Activated CD4-positive, alpha-beta T cell treated with anti-CD3 and anti-CD28 coated beads, Interleukin-2, amount 10 ng/mL, durations not matched to agents 24 days and 14 days (primary cell): ENCODE measurements at regions of chr5 and their contacts with region 1.

Region 1: GRCh38 chr5:148805326-148806290 is 20.8 kb upstream of the ADRB2 start:
- DNase-seq: no peak
- H3K4me3 Mint-ChIP-seq: peak overlapping the region; percentile 60
- H3K27ac Mint-ChIP-seq: peak overlapping the region; percentile 88
- H3K4me1 Mint-ChIP-seq: peaks cover 47% of the 10 kb centered on the region
- H3K27me3 Mint-ChIP-seq: peaks cover 11% of the 10 kb centered on the region

Region 2: DNA sequence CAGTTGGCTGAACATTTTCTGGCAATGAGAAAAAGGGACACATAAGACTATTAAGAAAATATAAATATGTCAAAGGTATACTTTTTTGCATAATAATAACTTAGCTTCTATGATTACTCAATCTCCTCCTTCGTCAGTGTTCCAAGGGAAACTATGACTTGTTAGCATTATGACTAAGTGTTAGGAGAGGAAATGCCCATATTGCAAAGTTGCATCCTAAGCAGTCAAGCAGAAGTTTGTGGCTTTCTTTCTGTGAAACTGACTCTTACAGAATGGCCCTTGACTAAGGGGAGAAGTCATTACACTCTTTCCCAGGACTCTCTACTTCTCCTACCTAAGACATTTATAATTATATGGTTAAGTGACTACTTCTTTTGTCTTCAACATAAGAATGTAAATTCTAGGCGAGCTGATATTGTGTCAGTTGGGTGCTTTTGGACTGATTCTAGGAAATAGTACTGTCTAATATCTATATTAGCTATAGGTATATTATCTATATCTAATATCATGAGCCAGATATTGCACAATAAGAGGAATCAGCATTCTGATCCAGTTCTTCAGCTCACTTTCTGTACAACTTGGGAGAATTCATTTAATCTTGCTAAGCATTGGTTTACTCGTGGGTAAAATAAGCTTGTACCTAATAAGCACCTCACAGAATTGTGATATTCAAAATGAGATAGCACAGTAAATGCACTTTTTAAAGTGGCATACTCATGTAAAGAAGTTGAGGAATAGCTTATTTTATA is 619.2 kb before region 1 on chr5:
- intact Hi-C with region 1: loop called (anchors 5 kb)
- DNase-seq: peak; percentile 61
- H3K4me3 Mint-ChIP-seq: no peak overlapping the region
- H3K27ac Mint-ChIP-seq: no peak overlapping the region
- H3K4me1 Mint-ChIP-seq: peaks cover 6% of the 10 kb centered on the region
- H3K27me3 Mint-ChIP-seq: peaks cover 8% of the 10 kb centered on the region

Region 3: GRCh38 chr5:148620696-148621095 is 184.9 kb before region 1 on chr5:
- intact Hi-C with region 1: loop called (anchors 5 kb)
- DNase-seq: peak; percentile 81
- H3K4me3 Mint-ChIP-seq: peak overlapping the region; percentile 10
- H3K27ac Mint-ChIP-seq: peak overlapping the region; percentile 55
- H3K4me1 Mint-ChIP-seq: peaks cover 25% of the 10 kb centered on the region
- H3K27me3 Mint-ChIP-seq: peaks cover 36% of the 10 kb centered on the region

Region 4: GRCh38 chr5:148791334-148791667 is 14.3 kb before region 1 on chr5:
- intact Hi-C with region 1: loop called (anchors 1 kb)
- DNase-seq: peak; percentile 69
- H3K4me3 Mint-ChIP-seq: no peak overlapping the region
- H3K27ac Mint-ChIP-seq: peak overlapping the region; percentile 21
- H3K4me1 Mint-ChIP-seq: peaks cover 24% of the 10 kb centered on the region
- H3K27me3 Mint-ChIP-seq: peaks cover 21% of the 10 kb centered on the region

Region 5: GRCh38 chr5:148826053-148826738 is 20.6 kb after region 1 on chr5 and contains the start of gene ADRB2:
- intact Hi-C with region 1: loop called (anchors 1 kb)
- DNase-seq: peak; percentile 96
- H3K4me3 Mint-ChIP-seq: peak within 1 kb of the TSS; percentile 90
- H3K27ac Mint-ChIP-seq: peak within 1 kb of the TSS; percentile 65
- H3K4me1 Mint-ChIP-seq: peaks cover 11% of the 10 kb centered on the region
- H3K27me3 Mint-ChIP-seq: peaks cover 73% of the 10 kb centered on the region
- total RNA-seq, gene ADRB2: 0.37 and 0.50 TPM in 2 replicates

Region 6: DNA sequence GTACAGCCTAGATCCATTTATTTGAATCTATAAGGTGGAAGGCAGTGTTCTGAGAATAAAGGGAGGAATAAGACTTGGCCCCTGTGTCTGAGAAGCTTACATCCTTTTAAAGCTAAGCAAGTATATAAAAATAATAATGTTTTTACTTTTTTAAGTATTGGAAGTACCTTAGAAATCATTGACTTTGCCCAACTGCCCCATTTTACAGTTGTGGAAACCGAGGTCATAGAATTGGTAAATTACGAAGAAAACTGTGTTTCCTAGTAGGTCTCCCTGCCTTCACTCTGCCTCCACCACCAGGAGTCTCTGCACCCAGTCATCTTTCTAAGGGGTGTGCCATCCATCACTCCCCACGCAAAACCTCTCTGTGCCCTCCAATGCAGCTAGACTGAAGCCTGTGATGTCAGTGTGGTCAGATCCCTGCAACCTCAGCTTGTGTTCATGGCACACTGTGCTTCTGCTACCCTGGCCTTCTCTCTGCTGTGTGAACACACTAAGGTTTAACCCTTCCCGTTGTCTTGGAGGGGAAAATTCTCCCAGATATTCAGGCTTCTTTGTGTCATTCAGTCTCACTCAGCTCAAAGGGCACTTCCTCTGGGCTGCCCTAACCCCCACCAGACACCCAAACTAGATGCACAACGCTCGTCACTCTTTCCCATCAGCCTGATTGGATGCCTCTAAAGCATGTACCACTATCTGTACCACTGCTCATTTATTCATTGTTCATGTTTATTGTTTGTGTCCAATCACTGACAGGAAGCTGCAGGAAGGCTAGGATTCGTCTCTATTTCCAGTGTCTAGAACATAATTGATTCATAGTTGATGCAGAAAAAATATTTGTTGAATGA is 39.0 kb after region 1 on chr5:
- intact Hi-C with region 1: no loop called
- DNase-seq: no peak
- H3K4me3 Mint-ChIP-seq: no peak overlapping the region
- H3K27ac Mint-ChIP-seq: no peak overlapping the region
- H3K4me1 Mint-ChIP-seq: peaks cover 24% of the 10 kb centered on the region
- H3K27me3 Mint-ChIP-seq: peaks cover 9% of the 10 kb centered on the region

Region 7: GRCh38 chr5:148972958-148973357 is 167.3 kb after region 1 on chr5:
- intact Hi-C with region 1: no loop called
- DNase-seq: no peak
- H3K4me3 Mint-ChIP-seq: no peak overlapping the region
- H3K27ac Mint-ChIP-seq: no peak overlapping the region
- H3K4me1 Mint-ChIP-seq: no peaks in the 10 kb centered on the region
- H3K27me3 Mint-ChIP-seq: peaks cover 10% of the 10 kb centered on the region

Region 8: GRCh38 chr5:149162401-149163084 is 356.9 kb after region 1 on chr5:
- intact Hi-C with region 1: no loop called
- DNase-seq: no peak
- H3K4me3 Mint-ChIP-seq: no peak overlapping the region
- H3K27ac Mint-ChIP-seq: no peak overlapping the region
- H3K4me1 Mint-ChIP-seq: no peaks in the 10 kb centered on the region
- H3K27me3 Mint-ChIP-seq: peaks cover 11% of the 10 kb centered on the region

Region 9: DNA sequence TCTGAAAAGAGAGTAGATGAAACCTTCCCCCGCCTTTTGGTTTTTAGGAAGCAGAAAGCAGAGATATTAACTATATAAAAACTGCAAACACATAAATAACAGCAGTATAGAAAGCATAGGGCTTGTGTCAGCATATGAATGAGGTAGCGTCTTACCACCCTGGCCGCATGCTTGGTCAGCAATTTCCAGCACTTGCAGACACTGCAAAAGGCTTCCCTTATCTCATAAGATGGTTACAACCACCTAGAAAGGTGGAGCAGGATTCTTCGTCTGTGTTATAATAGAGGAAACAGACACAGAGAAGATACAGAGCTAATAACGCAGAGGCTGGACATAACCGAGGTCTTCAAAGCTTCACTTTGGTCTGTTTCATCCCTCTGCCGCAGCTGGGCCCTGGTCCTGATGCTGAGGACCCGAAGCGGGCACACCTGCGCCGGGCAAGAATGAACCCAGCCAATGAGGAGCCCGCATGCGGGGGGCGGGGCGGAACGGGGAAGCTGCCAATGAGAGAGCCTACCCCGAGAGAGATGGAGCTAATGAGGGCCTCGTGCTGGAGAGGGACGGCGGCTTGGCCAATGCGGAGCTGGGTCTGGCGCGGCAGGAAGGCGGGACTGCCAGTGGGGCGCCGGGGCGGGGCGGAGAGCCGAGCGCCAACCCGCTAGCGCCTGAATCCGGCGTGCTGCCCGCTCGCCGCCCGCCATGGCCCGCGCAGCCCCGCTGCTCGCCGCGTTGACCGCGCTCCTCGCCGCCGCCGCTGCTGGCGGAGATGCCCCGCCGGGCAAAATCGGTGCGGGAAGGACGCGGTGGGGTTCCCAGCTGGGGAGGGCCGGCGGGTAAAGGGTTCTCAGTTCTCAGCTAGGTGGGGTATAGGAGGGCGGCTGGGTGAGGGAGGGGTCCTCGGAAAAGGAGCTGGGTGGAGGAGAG is 552.0 kb after region 1 on chr5 and contains the start of gene PCYOX1L:
- intact Hi-C with region 1: loop called (anchors 10 kb)
- DNase-seq: peak; percentile 99
- H3K4me3 Mint-ChIP-seq: peak within 1 kb of the TSS; percentile 90
- H3K27ac Mint-ChIP-seq: peak within 1 kb of the TSS; percentile 83
- H3K4me1 Mint-ChIP-seq: peaks cover 60% of the 10 kb centered on the region
- H3K27me3 Mint-ChIP-seq: no peaks in the 10 kb centered on the region
- total RNA-seq, gene PCYOX1L: 19.8 and 21.2 TPM in 2 replicates